ENCODE measurements at regions of chr3 and their contacts with region 1.

Region 1: GRCh38 chr3:120095226-120095978 is 1.2 kb upstream of the GSK3B start:
- DNase-seq: peak; percentile 95
- ATAC-seq: peak; percentile 60

Region 2: GRCh38 chr3:119891944-119892721 is 203.3 kb before region 1 on chr3:
- intact Hi-C with region 1: loop called (anchors 2 kb)
- DNase-seq: no peak
- ATAC-seq: peak; percentile 85

Region 3: GRCh38 chr3:119912220-119912619 is 183.2 kb before region 1 on chr3:
- intact Hi-C with region 1: loop called (anchors 5 kb)
- DNase-seq: no peak
- ATAC-seq: no peak

Region 4: DNA sequence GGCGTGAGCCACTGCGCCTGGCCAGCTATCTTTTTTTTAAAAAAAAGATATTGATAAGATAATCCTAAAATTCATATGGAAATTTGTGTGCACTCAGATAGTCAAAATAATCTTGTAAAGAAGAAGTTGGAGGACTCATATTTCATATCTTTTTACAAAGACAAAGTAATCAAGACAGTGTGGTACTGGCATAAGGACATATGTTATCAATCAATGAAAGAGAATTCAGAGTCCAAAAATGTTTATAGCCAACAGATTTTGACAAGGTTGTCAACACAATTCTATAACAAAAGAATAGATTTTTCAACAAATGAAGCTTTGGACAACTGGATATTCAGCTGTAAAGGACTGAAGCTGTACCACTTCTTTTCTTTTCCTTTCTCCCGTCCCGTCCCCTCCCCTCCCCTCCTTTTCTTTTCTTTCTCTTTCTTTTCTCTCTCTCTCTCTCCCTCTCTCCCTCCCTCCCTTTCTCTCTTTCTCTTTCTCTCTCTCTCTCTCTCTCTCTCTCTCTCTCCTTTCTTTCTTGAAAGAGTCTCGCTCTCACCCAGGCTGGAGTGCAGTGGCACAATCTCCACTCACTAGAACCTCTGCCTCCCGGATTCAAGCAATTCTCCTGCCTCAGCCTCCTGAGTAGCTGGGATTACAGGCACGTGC is 127.9 kb before region 1 on chr3:
- intact Hi-C with region 1: no loop called
- DNase-seq: no peak
- ATAC-seq: no peak

Region 5: GRCh38 chr3:119978554-119979208 is 116.7 kb before region 1 on chr3:
- intact Hi-C with region 1: loop called (anchors 5 kb)
- DNase-seq: no peak
- ATAC-seq: peak; percentile 62

Region 6: DNA sequence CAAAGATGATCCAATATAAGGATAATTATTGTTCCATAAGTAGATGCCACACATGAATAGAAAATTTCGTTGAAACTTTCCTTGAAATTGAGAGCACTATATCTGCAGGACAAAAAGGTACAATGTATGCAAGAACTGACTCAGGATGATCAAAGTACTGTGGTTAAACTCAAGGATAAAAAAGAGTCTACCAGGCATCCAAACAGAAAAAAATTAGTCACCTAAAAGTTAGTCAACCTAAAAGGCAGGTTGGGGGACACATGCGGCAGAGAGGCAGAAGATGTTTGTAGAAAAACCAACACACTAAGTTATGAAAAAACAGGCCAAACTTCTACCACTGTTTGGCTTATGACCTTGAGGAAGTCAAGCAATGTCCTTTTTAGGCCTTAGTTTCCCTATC is 69.9 kb before region 1 on chr3:
- intact Hi-C with region 1: loop called (anchors 5 kb)
- DNase-seq: no peak
- ATAC-seq: no peak

Region 7: GRCh38 chr3:120147072-120147871 is 51.9 kb after region 1 on chr3:
- intact Hi-C with region 1: loop called (anchors 5 kb)
- DNase-seq: no peak
- ATAC-seq: peak; percentile 32

Measured in Right ventricle myocardium inferior (tissue), 1 donor.